Activated T-helper 1 cell treated with anti-CD3 and anti-CD28 coated beads, Interleukin-12 subunit alpha, Interleukin-12 subunit beta, Interleukin-2, Interleukin-4 antibody, amounts not matched to agents 30 ng/mL and 10 ng/mL and 1 ng/mL, durations not matched to agents 14 hours and 24 hours and 36 hours (primary cell): ENCODE measurements at regions of chr2 and their contacts with region 1.

Region 1: DNA sequence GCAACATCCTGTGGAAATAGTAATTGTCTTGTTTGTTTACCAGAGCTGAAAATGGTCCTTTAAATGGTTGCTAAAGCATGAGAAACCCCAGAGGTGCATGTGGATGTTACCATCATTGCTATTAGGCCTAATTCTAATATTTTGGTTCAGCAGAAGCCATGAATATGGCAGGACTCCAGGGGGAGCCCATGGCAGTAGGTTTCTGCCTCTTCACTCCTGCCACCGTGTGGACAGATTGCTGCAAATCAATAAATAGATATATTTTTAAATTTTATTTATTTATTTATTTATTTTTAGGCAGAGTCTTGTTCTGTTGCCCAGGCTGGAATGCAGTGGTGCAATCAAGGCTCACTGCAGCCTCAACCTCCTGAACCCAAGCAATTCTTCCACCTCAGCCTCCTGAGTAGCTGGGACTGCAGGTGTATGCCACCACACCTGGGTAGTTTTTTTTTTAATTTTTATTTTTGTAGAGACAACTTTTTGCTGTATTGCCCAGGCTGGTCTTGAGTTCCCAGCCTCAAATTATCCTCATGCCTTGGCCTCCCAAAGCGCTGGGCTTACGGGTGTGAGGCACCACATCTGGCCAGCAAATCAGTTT is 54.9 kb upstream of the CAPN13 start:
- DNase-seq: no peak
- H3K4me3 Mint-ChIP-seq: no peak overlapping the region
- H3K27ac Mint-ChIP-seq: no peak overlapping the region
- H3K4me1 Mint-ChIP-seq: peaks cover 13% of the 10 kb centered on the region
- H3K27me3 Mint-ChIP-seq: peaks cover 8% of the 10 kb centered on the region

Region 2: DNA sequence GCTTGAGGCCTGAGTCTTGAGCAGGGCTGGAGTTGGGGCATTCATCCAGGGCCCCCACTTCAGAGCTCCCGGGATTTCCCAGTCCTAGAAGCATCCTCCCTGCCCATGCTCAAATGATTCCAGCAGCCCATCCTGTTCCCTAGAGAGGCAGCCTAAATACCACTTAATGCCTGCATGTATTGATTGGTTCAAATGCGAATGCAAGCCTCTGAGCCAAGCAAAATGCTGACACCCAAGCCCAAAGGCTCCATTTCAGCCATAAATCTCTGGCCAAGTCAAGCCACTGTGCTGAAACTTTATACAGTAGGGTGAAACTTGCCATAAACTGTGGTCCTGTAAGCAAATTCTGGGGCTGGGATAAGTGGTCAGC is 1467.2 kb before region 1 on chr2:
- intact Hi-C with region 1: no loop called
- DNase-seq: no peak
- H3K4me3 Mint-ChIP-seq: no peak overlapping the region
- H3K27ac Mint-ChIP-seq: no peak overlapping the region
- H3K4me1 Mint-ChIP-seq: no peaks in the 10 kb centered on the region
- H3K27me3 Mint-ChIP-seq: peaks cover 9% of the 10 kb centered on the region

Region 3: GRCh38 chr2:31170071-31170698 is 308.0 kb after region 1 on chr2:
- intact Hi-C with region 1: loop called (anchors 5 kb)
- DNase-seq: peak; percentile 31
- H3K4me3 Mint-ChIP-seq: no peak overlapping the region
- H3K27ac Mint-ChIP-seq: no peak overlapping the region
- H3K4me1 Mint-ChIP-seq: no peaks in the 10 kb centered on the region
- H3K27me3 Mint-ChIP-seq: peaks cover 3% of the 10 kb centered on the region